WTC11 (cell line): ENCODE measurements at regions of chr3 and their contacts with region 1.

Region 1: DNA sequence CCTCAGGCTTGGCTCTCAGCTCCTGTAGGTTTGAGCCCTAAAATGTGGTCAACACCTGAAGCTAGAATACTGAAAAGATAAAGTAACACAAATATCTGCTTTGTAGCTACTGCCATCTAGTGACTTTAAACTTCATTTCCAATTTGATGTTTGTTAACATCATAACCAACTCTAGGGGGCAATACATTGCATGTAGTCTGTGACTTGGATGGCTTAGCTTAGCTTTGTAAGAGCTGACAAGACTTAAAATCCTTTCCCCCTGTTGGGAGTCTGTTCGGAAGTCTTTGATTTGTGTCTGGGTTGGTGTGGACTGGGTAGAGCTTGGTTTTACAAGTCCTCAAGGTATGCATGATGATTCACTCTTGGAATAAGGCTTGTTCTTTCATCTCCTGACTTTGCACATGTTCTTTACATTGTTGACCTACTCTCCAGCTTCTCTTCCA is 51.7 kb downstream of the SCN11A start:
- DNase-seq: no peak
- ATAC-seq: peak; percentile 96
- H3K4me3 Mint-ChIP-seq: no peak overlapping the region
- H3K27ac Mint-ChIP-seq: no peak overlapping the region
- H3K4me1 Mint-ChIP-seq: peaks cover 8% of the 10 kb centered on the region
- H3K27me3 Mint-ChIP-seq: no peaks in the 10 kb centered on the region
- CTCF ChIP-seq: peak; percentile 39

Region 2: DNA sequence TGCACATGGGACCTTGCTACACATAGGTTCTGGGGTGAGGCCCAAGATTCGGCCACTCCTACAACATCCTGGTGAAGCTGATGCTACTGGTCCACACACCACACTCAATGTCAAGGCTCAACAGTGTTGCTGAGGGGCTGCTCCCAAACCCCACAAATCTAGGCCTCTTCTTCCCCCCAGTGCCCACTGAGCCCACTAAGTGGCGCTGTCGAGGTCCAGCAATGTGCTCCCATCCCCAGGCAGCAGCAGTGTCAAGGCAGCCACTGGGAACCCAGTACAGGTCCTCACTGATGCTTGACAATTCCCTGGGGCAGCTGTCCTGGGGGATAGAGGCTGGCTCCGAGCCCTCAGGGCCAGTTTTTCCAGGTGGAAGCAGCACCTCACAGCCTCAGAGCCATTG is 372.1 kb before region 1 on chr3:
- CTCF ChIA-PET with region 1: interaction called, 11 read pairs
- POLR2A ChIA-PET with region 1: no interaction called
- DNase-seq: peak; percentile 87
- ATAC-seq: peak; percentile 86
- H3K4me3 Mint-ChIP-seq: no peak overlapping the region
- H3K27ac Mint-ChIP-seq: no peak overlapping the region
- H3K4me1 Mint-ChIP-seq: peaks cover 14% of the 10 kb centered on the region
- H3K27me3 Mint-ChIP-seq: no peaks in the 10 kb centered on the region; the same call in 1 of the 2 replicates
- CTCF ChIP-seq: peak; percentile 51

Region 3: GRCh38 chr3:38689774-38690173 is 310.3 kb before region 1 on chr3:
- CTCF ChIA-PET with region 1: interaction called, 10 read pairs
- POLR2A ChIA-PET with region 1: no interaction called
- DNase-seq: no peak
- ATAC-seq: no peak
- H3K4me3 Mint-ChIP-seq: no peak overlapping the region
- H3K27ac Mint-ChIP-seq: no peak overlapping the region
- H3K4me1 Mint-ChIP-seq: no peaks in the 10 kb centered on the region
- H3K27me3 Mint-ChIP-seq: no peaks in the 10 kb centered on the region; the same call in 1 of the 2 replicates
- CTCF ChIP-seq: no peak

Region 4: DNA sequence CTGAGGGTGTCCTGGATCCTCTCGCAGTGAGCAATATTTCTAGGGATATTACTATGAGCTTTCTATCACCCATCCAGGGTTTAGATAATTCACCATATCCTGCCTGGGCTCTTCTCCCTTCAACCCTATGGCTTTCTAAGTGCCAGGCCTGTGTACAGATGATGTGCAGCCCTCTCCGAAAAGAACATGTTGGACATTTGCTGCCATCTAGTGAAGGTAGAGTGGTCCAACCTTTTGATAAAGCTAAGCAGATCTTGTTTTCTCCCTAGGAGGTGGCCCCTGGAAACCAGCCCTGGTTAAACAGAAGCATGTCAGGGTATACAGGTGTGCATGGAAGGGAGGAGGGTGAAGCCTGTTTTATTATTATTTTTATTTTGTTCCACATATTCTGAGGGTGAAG is 156.1 kb before region 1 on chr3:
- CTCF ChIA-PET with region 1: interaction called, 29 read pairs
- POLR2A ChIA-PET with region 1: no interaction called
- DNase-seq: no peak
- ATAC-seq: peak; percentile 86
- H3K4me3 Mint-ChIP-seq: no peak overlapping the region
- H3K27ac Mint-ChIP-seq: no peak overlapping the region
- H3K4me1 Mint-ChIP-seq: no peaks in the 10 kb centered on the region
- H3K27me3 Mint-ChIP-seq: no peaks in the 10 kb centered on the region; the same call in 1 of the 2 replicates
- CTCF ChIP-seq: no peak

Region 5: GRCh38 chr3:38960953-38961622 is 38.9 kb before region 1 on chr3:
- CTCF ChIA-PET with region 1: interaction called, 46 read pairs
- POLR2A ChIA-PET with region 1: no interaction called
- DNase-seq: peak; percentile 72
- ATAC-seq: peak; percentile 97
- H3K4me3 Mint-ChIP-seq: no peak overlapping the region
- H3K27ac Mint-ChIP-seq: 0 out of 2 replicates have a peak overlapping the region, but pooled peaks have one; percentile 39
- H3K4me1 Mint-ChIP-seq: peaks cover 13% of the 10 kb centered on the region
- H3K27me3 Mint-ChIP-seq: no peaks in the 10 kb centered on the region
- CTCF ChIP-seq: peak; percentile 55

Region 6: DNA sequence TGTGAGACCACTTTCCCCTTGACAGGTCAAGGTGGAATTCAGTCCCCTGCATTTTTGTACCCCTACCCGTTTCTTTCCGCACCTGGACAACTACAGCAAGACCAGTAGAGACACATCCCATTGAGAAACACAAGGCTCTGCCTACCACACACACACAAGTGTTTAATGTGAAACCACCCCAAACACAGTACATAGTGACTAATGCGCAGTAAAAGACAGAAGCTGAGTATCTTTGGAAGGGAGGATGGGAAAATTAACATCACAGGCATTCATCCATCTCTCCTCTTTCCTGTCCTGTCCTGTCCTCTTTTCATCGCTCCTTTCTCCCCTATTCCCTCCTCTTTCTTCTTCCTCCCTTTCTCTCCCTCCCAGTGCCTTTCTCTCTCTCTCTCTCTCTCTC is 13.1 kb before region 1 on chr3:
- CTCF ChIA-PET with region 1: interaction called, 27 read pairs
- POLR2A ChIA-PET with region 1: no interaction called
- DNase-seq: no peak
- ATAC-seq: no peak
- H3K4me3 Mint-ChIP-seq: no peak overlapping the region
- H3K27ac Mint-ChIP-seq: no peak overlapping the region
- H3K4me1 Mint-ChIP-seq: peaks cover 24% of the 10 kb centered on the region
- H3K27me3 Mint-ChIP-seq: no peaks in the 10 kb centered on the region
- CTCF ChIP-seq: no peak